Lower leg skin (tissue), 4 donors: ENCODE measurements at regions of chr7 and their contacts with region 1.

Region 1: GRCh38 chr7:1225441-1226185 is 7.1 kb upstream of the UNCX start:
- DNase-seq: no peak
- H3K4me3 ChIP-seq: no peak overlapping the region
- CTCF ChIP-seq: no peak
- POLR2A ChIP-seq: no peak

Region 2: GRCh38 chr7:1044191-1045068 is 181.2 kb before region 1 on chr7 and contains the start of gene GPR146:
- intact Hi-C with region 1: no loop called
- DNase-seq: peak; percentile 95 to 99
- H3K4me3 ChIP-seq: peak within 1 kb of the TSS; percentile 60
- CTCF ChIP-seq: peak in 1 of 3 donors; percentile 24
- POLR2A ChIP-seq: no peak
- total RNA-seq, gene GPR146: 26.9 to 61.7 (median 39.0) TPM

Region 3: GRCh38 chr7:1386623-1387220 is 161.1 kb after region 1 on chr7:
- intact Hi-C with region 1: no loop called
- DNase-seq: no peak
- H3K4me3 ChIP-seq: no peak overlapping the region
- CTCF ChIP-seq: no peak
- POLR2A ChIP-seq: no peak

Region 4: GRCh38 chr7:1403638-1404459 is 178.2 kb after region 1 on chr7:
- intact Hi-C with region 1: loop called (anchors 10 kb)
- DNase-seq: no peak
- H3K4me3 ChIP-seq: no peak overlapping the region
- CTCF ChIP-seq: no peak
- POLR2A ChIP-seq: no peak